ENCODE measurements at regions of chr2 and their contacts with region 1.

Region 1: GRCh38 chr2:153519257-153519875 is 40.8 kb upstream of the RPRM start:
- DNase-seq: peak; percentile 45
- ATAC-seq: no peak
- H3K4me3 ChIP-seq: no peak overlapping the region
- H3K4me3 Mint-ChIP-seq: no peak overlapping the region
- H3K27ac ChIP-seq: no peak overlapping the region
- H3K27ac Mint-ChIP-seq: no peak overlapping the region
- H3K4me1 ChIP-seq: no peaks in the 10 kb centered on the region
- H3K4me1 Mint-ChIP-seq: no peaks in the 10 kb centered on the region
- H3K27me3 ChIP-seq: no peaks in the 10 kb centered on the region
- H3K27me3 Mint-ChIP-seq: peaks cover 9% of the 10 kb centered on the region
- CTCF ChIP-seq: peak; percentile 96

Region 2: GRCh38 chr2:152036611-152037469 is 1482.5 kb before region 1 on chr2:
- CTCF ChIA-PET with region 1: interaction called, 14 read pairs
- POLR2A ChIA-PET with region 1: no interaction called
- intact Hi-C with region 1: no loop called
- DNase-seq: peak; percentile 72
- ATAC-seq: peak; percentile 58
- H3K4me3 ChIP-seq: no peak overlapping the region
- H3K4me3 Mint-ChIP-seq: no peak overlapping the region
- H3K27ac ChIP-seq: no peak overlapping the region
- H3K27ac Mint-ChIP-seq: no peak overlapping the region
- H3K4me1 ChIP-seq: no peaks in the 10 kb centered on the region
- H3K4me1 Mint-ChIP-seq: no peaks in the 10 kb centered on the region
- H3K27me3 ChIP-seq: no peaks in the 10 kb centered on the region
- H3K27me3 Mint-ChIP-seq: no peaks in the 10 kb centered on the region
- CTCF ChIP-seq: peak; percentile 82

Region 3: GRCh38 chr2:152189622-152190495 is 1329.5 kb before region 1 on chr2:
- CTCF ChIA-PET with region 1: no interaction called
- POLR2A ChIA-PET with region 1: no interaction called
- intact Hi-C with region 1: loop called (anchors 5 kb)
- DNase-seq: peak; percentile 47
- ATAC-seq: peak; percentile 60
- H3K4me3 ChIP-seq: no peak overlapping the region
- H3K4me3 Mint-ChIP-seq: no peak overlapping the region
- H3K27ac ChIP-seq: no peak overlapping the region
- H3K27ac Mint-ChIP-seq: no peak overlapping the region
- H3K4me1 ChIP-seq: no peaks in the 10 kb centered on the region
- H3K4me1 Mint-ChIP-seq: no peaks in the 10 kb centered on the region
- H3K27me3 ChIP-seq: peaks cover 0 to 9% (median 3%) of the 10 kb centered on the region in 4 experiments
- H3K27me3 Mint-ChIP-seq: peaks cover 33% of the 10 kb centered on the region
- CTCF ChIP-seq: peak; percentile 75

Region 4: GRCh38 chr2:152740743-152741328 is 778.5 kb before region 1 on chr2:
- CTCF ChIA-PET with region 1: interaction called, 5 read pairs
- POLR2A ChIA-PET with region 1: no interaction called
- intact Hi-C with region 1: loop called (anchors 2 kb)
- DNase-seq: peak; percentile 56
- ATAC-seq: peak; percentile 72
- H3K4me3 ChIP-seq: no peak overlapping the region
- H3K4me3 Mint-ChIP-seq: no peak overlapping the region
- H3K27ac ChIP-seq: no peak overlapping the region
- H3K27ac Mint-ChIP-seq: no peak overlapping the region
- H3K4me1 ChIP-seq: no peaks in the 10 kb centered on the region
- H3K4me1 Mint-ChIP-seq: no peaks in the 10 kb centered on the region
- H3K27me3 ChIP-seq: no peaks in the 10 kb centered on the region
- H3K27me3 Mint-ChIP-seq: no peaks in the 10 kb centered on the region
- CTCF ChIP-seq: peak; percentile 97